Dendritic cell treated with granulocyte-macrophage colony-stimulating factor and Interleukin-4, amounts not matched to agents 40 ng/mL and 50 ng/mL, for 4 days (primary cell): ENCODE measurements at regions of chr5 and their contacts with region 1.

Region 1: GRCh38 chr5:121974261-121974660 is 12.5 kb downstream of the SRFBP1 start:
- H3K4me3 Mint-ChIP-seq: no peak overlapping the region
- H3K27ac Mint-ChIP-seq: no peak overlapping the region
- H3K4me1 Mint-ChIP-seq: peaks cover 7% of the 10 kb centered on the region
- H3K27me3 Mint-ChIP-seq: no peaks in the 10 kb centered on the region

Region 2: DNA sequence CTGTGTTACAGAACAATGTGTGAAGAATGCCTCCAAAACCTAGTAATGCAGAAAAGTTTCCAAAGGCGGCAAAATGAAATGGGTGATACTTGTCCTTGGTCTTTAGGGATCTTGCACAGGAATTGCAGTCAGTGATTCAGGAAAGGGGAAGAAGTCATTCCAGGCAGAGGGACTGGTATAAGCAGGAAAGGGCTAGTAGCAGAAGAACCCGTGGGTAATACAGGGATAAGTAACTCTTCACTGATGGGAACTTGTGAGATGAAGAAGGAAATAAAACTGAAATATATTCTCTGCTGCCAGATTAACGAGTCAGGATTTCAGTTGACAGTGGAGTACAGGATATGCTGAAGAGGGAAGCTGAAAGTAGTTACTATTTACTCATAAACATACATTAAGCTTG is 11.3 kb before region 1 on chr5:
- intact Hi-C with region 1: loop called (anchors 1 kb)
- H3K4me3 Mint-ChIP-seq: peak overlapping the region; percentile 95
- H3K27ac Mint-ChIP-seq: peak overlapping the region; percentile 93
- H3K4me1 Mint-ChIP-seq: peaks cover 33% of the 10 kb centered on the region
- H3K27me3 Mint-ChIP-seq: peaks cover 12% of the 10 kb centered on the region